ENCODE measurements at regions of chr11 and their contacts with region 1.

Region 1: GRCh38 chr11:66694732-66695207 is 17.1 kb upstream of the RBM4B start:
- DNase-seq: peak; percentile 94
- H3K4me3 ChIP-seq: no peak overlapping the region
- H3K27ac ChIP-seq: no peak overlapping the region
- H3K4me1 ChIP-seq: peaks cover 5% of the 10 kb centered on the region
- H3K27me3 ChIP-seq: no peaks in the 10 kb centered on the region
- CTCF ChIP-seq: peak; percentile 97 to 98

Region 2: DNA sequence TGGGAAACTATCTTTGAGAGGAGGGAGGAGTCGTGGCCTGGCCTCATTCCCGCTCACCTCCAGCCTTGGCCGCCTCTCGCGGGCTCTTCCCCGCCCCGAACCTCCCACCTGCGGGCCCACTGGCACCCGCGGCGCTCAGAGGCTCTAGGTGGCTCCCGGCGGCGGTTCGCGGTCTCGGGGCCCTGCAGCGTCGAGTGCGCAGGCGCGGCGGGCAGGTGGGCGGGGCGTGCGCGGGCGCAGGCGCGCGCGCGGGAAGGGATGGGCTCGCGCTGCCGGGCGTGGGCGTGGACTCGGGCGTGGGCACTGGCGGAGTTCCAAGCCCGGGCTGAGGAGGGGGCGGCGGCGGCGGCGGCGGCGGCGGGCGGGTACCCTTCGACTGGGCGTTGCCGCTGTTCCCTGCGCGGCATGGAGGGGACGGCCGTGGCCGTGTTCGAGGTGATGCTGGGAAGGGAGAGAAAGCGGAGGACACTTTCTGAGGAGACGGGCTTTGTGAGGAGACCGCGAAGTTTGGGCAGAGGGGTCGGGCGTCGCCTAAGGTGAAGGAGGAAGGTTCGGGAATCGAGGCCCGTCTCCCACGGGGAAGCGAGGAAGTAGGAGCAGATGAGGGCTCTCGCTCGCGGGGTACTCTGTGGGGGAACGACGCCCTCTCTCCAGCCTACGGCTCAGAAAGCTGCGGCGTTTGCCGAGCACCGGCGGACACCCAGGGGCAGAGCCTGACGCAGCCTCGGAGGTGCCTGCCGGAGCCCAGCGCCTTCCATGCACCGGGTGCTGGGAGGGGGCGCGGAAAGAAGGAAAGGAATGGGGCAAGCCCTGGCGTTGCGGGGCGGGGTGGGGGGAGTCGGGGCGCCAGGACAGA is 49.9 kb after region 1 on chr11:
- CTCF ChIA-PET with region 1: no interaction called
- dilution Hi-C with region 1: no loop called
- in situ Hi-C with region 1: no loop called
- intact Hi-C with region 1: loop called (anchors 2 kb)
- DNase-seq: peak; percentile 82
- H3K4me3 ChIP-seq: peak overlapping the region; percentile 66 to 97 (median 84)
- H3K27ac ChIP-seq: peak overlapping the region; percentile 92
- H3K4me1 ChIP-seq: peaks cover 28% of the 10 kb centered on the region
- H3K27me3 ChIP-seq: no peaks in the 10 kb centered on the region
- CTCF ChIP-seq: no peak

Region 3: DNA sequence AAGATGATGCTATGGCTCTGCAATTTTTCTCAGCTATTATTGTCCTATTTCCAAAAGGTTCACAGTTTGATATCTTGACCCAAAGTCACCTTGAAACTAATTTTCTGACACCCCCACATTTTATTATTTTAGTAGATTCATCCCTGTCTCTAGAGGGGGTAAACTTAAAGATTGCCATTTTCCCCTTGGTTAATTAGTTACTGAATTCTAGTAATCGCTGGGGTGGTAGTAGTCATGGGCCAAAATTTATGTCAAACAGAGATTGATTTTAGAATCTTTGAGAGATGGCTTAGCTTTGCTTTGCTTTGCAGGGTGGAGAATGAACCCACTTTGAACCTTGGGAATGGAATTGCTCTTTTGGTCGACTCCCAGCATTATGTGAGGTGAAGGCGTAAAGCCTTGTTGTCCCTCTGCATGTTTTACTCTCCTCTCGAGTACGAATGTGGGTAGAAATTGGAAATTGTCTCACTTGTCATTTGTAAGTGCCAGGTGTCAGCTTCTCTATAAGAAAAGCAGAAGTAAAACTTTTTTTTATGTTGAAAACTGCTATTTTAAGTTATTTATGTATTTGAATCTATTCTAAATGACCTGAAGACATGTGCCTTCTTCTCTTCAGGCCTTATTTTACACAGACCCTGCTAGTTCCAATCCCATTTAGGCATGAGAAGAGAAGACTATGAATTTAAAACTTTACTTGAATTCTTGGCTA is 106.1 kb after region 1 on chr11:
- CTCF ChIA-PET with region 1: no interaction called
- dilution Hi-C with region 1: loop called (anchors 5 kb)
- in situ Hi-C with region 1: no loop called
- intact Hi-C with region 1: no loop called
- DNase-seq: no peak
- H3K4me3 ChIP-seq: no peak overlapping the region
- H3K27ac ChIP-seq: no peak overlapping the region
- H3K4me1 ChIP-seq: no peaks in the 10 kb centered on the region
- H3K27me3 ChIP-seq: no peaks in the 10 kb centered on the region
- CTCF ChIP-seq: no peak

Region 4: GRCh38 chr11:66835768-66836405 is 141.1 kb after region 1 on chr11:
- CTCF ChIA-PET with region 1: no interaction called
- dilution Hi-C with region 1: no loop called
- in situ Hi-C with region 1: loop called (anchors 5 kb)
- intact Hi-C with region 1: loop called (anchors 1 kb)
- DNase-seq: no peak
- H3K4me3 ChIP-seq: no peak overlapping the region
- H3K27ac ChIP-seq: no peak overlapping the region
- H3K4me1 ChIP-seq: no peaks in the 10 kb centered on the region
- H3K27me3 ChIP-seq: no peaks in the 10 kb centered on the region
- CTCF ChIP-seq: no peak

Region 5: GRCh38 chr11:66976048-66976467 is 281.3 kb after region 1 on chr11:
- CTCF ChIA-PET with region 1: no interaction called
- dilution Hi-C with region 1: no loop called
- in situ Hi-C with region 1: no loop called
- intact Hi-C with region 1: loop called (anchors 1 kb)
- DNase-seq: no peak
- H3K4me3 ChIP-seq: no peak overlapping the region
- H3K27ac ChIP-seq: no peak overlapping the region
- H3K4me1 ChIP-seq: peaks cover 15% of the 10 kb centered on the region
- H3K27me3 ChIP-seq: no peaks in the 10 kb centered on the region
- CTCF ChIP-seq: peak; percentile 52 to 76

Measured in mammary epithelial cell (primary cell).